ENCODE measurements at regions of chr17 and their contacts with region 1.

Region 1: GRCh38 chr17:12020642-12021622 is at the start of gene MAP2K4:
- DNase-seq: peak; percentile 75 to 88
- H3K4me3 ChIP-seq: peak within 1 kb of the TSS; percentile 52
- H3K4me3 Mint-ChIP-seq: peak within 1 kb of the TSS; percentile 66
- H3K27ac Mint-ChIP-seq: no peak within 1 kb of the TSS
- H3K4me1 ChIP-seq: 0 out of 2 replicates have a peak, but pooled peaks cover 5% of the 10 kb centered on the region
- H3K4me1 Mint-ChIP-seq: no peaks in the 10 kb centered on the region
- H3K27me3 ChIP-seq: no peaks in the 10 kb centered on the region
- H3K27me3 Mint-ChIP-seq: no peaks in the 10 kb centered on the region
- CTCF ChIP-seq: no peak
- total RNA-seq, gene MAP2K4: 20.7 and 20.9 TPM in 2 replicates

Region 2: GRCh38 chr17:11742886-11743285 is 278.0 kb before region 1 on chr17:
- CTCF ChIA-PET with region 1: no interaction called
- POLR2A ChIA-PET with region 1: no interaction called
- intact Hi-C with region 1: no loop called
- DNase-seq: peak in 1 of 2 experiments; percentile 1
- H3K4me3 ChIP-seq: no peak overlapping the region
- H3K4me3 Mint-ChIP-seq: no peak overlapping the region
- H3K27ac Mint-ChIP-seq: no peak overlapping the region
- H3K4me1 ChIP-seq: no peaks in the 10 kb centered on the region
- H3K4me1 Mint-ChIP-seq: no peaks in the 10 kb centered on the region
- H3K27me3 ChIP-seq: no peaks in the 10 kb centered on the region
- H3K27me3 Mint-ChIP-seq: peaks cover 4% of the 10 kb centered on the region
- CTCF ChIP-seq: no peak

Region 3: GRCh38 chr17:11848330-11848729 is 172.6 kb before region 1 on chr17:
- CTCF ChIA-PET with region 1: no interaction called
- POLR2A ChIA-PET with region 1: no interaction called
- intact Hi-C with region 1: no loop called
- DNase-seq: no peak
- H3K4me3 ChIP-seq: no peak overlapping the region
- H3K4me3 Mint-ChIP-seq: no peak overlapping the region
- H3K27ac Mint-ChIP-seq: no peak overlapping the region
- H3K4me1 ChIP-seq: no peaks in the 10 kb centered on the region
- H3K4me1 Mint-ChIP-seq: peaks cover 7% of the 10 kb centered on the region
- H3K27me3 ChIP-seq: no peaks in the 10 kb centered on the region
- H3K27me3 Mint-ChIP-seq: no peaks in the 10 kb centered on the region
- CTCF ChIP-seq: no peak

Region 4: GRCh38 chr17:11969565-11969964 is 51.4 kb before region 1 on chr17:
- CTCF ChIA-PET with region 1: no interaction called
- POLR2A ChIA-PET with region 1: no interaction called
- intact Hi-C with region 1: no loop called
- DNase-seq: no peak
- H3K4me3 ChIP-seq: no peak overlapping the region
- H3K4me3 Mint-ChIP-seq: no peak overlapping the region
- H3K27ac Mint-ChIP-seq: no peak overlapping the region
- H3K4me1 ChIP-seq: no peaks in the 10 kb centered on the region
- H3K4me1 Mint-ChIP-seq: no peaks in the 10 kb centered on the region
- H3K27me3 ChIP-seq: no peaks in the 10 kb centered on the region
- H3K27me3 Mint-ChIP-seq: no peaks in the 10 kb centered on the region
- CTCF ChIP-seq: no peak

Region 5: DNA sequence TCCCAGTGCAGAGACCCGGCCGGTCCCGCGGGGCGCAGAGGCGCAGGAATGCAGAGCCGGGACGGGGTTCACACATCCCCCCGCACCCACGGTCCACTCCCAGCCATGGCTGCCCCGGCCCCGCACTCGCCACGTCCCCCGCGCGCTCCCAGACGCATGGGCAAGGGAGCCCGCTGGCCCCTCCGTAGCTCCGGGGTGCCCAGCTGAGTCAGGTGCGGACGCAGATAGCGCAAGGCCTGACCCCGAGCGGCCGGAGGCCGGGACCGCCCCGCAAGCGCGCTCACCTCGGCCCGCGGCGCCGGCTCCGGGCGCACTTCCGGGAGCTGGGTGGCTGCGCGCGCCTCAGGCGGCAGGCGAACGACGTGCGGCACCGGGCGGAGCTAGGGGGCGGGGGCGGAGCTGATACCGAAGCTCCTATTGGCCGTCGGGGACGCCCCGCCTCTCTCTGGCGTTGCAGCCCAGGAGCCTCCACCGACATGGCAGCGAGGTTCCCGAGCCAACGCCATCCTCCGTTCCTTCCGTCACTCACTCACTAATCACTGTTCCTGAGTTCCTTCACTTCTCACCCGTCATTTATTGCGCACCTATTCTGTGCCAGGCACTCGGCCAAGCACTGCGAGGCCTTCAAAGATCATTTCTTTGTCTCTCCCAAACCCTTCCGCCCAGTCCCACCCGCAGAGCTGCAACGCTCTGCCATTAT is 23.6 kb before region 1 on chr17 and contains the start of gene ZNF18:
- CTCF ChIA-PET with region 1: no interaction called
- POLR2A ChIA-PET with region 1: interaction called, 35 read pairs
- intact Hi-C with region 1: loop called (anchors 1 kb)
- DNase-seq: peak; percentile 87 to 91
- H3K4me3 ChIP-seq: peak within 1 kb of the TSS; percentile 71
- H3K4me3 Mint-ChIP-seq: peak within 1 kb of the TSS; percentile 90
- H3K27ac Mint-ChIP-seq: peak within 1 kb of the TSS; percentile 96
- H3K4me1 ChIP-seq: no peaks in the 10 kb centered on the region
- H3K4me1 Mint-ChIP-seq: peaks cover 6% of the 10 kb centered on the region
- H3K27me3 ChIP-seq: no peaks in the 10 kb centered on the region
- H3K27me3 Mint-ChIP-seq: no peaks in the 10 kb centered on the region
- CTCF ChIP-seq: no peak
- total RNA-seq, gene ZNF18: 4.3 and 4.4 TPM in 2 replicates

Region 6: DNA sequence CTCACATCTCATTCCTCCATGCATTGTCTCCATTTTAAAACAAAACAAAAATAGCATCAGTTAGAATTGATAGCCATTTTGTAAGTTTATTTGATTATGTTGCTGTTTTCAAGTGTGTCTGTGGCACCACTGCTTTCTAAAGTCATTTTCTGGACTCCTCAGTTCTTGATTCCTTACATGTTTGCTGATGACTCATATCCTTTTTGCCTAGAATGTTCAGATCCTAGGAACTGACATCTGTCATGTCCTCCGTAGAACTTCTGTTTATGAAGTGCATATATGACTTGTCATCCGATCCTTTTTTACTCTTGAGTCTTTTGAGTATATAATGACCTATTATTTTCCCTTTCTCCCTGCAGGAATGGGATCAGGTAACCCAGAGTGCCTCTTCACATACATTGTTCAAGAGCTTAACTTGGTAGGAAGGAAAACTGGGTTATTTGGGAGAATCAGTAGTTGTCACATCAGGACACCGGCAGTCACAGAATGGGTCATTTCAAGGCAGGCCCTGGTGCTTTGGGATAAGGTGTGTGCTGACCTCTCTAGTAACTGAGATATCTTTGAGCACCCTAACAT is 69.0 kb after region 1 on chr17:
- CTCF ChIA-PET with region 1: no interaction called
- POLR2A ChIA-PET with region 1: no interaction called
- intact Hi-C with region 1: no loop called
- DNase-seq: no peak
- H3K4me3 ChIP-seq: no peak overlapping the region
- H3K4me3 Mint-ChIP-seq: no peak overlapping the region
- H3K27ac Mint-ChIP-seq: no peak overlapping the region
- H3K4me1 ChIP-seq: no peaks in the 10 kb centered on the region
- H3K4me1 Mint-ChIP-seq: peaks cover 5% of the 10 kb centered on the region
- H3K27me3 ChIP-seq: no peaks in the 10 kb centered on the region
- H3K27me3 Mint-ChIP-seq: no peaks in the 10 kb centered on the region
- CTCF ChIP-seq: no peak